Colonic mucosa (tissue), 4 donors: ENCODE measurements at regions of chr9 and their contacts with region 1.

Region 1: GRCh38 chr9:7094052-7094451 is 336.3 kb downstream of the KDM4C start:
- DNase-seq: no peak
- H3K4me3 ChIP-seq: no peak overlapping the region
- H3K27ac ChIP-seq: no peak overlapping the region
- H3K4me1 ChIP-seq: no peaks in the 10 kb centered on the region
- H3K27me3 ChIP-seq: no peaks in the 10 kb centered on the region
- CTCF ChIP-seq: peak; percentile 42

Region 2: GRCh38 chr9:7186175-7186574 is 92.1 kb after region 1 on chr9:
- intact Hi-C with region 1: loop called (anchors 10 kb)
- DNase-seq: peak; percentile 25
- H3K4me3 ChIP-seq: no peak overlapping the region
- H3K27ac ChIP-seq: no peak overlapping the region
- H3K4me1 ChIP-seq: no peaks in the 10 kb centered on the region
- H3K27me3 ChIP-seq: no peaks in the 10 kb centered on the region
- CTCF ChIP-seq: peak; percentile 48